CD8-positive, alpha-beta T cell (primary cell): ENCODE measurements at regions of chr22 and their contacts with region 1.

Region 1: GRCh38 chr22:20298803-20299735 is 20.8 kb downstream of the DGCR6L start:
- DNase-seq: peak; percentile 75 to 93 (median 89)
- ATAC-seq: peak; percentile 93
- H3K4me3 ChIP-seq: peak overlapping the region; percentile 43 to 67
- H3K4me3 Mint-ChIP-seq: peak overlapping the region; percentile 82
- H3K27ac ChIP-seq: peak overlapping the region in 1 of 2 experiments; percentile 23
- H3K27ac Mint-ChIP-seq: no peak overlapping the region
- H3K4me1 ChIP-seq: peaks cover 9% of the 10 kb centered on the region
- H3K4me1 Mint-ChIP-seq: peaks cover 7% of the 10 kb centered on the region
- H3K27me3 ChIP-seq: peaks cover 0 to 4% of the 10 kb centered on the region in 2 experiments
- H3K27me3 Mint-ChIP-seq: peaks cover 3% of the 10 kb centered on the region
- CTCF ChIP-seq: no peak

Region 2: DNA sequence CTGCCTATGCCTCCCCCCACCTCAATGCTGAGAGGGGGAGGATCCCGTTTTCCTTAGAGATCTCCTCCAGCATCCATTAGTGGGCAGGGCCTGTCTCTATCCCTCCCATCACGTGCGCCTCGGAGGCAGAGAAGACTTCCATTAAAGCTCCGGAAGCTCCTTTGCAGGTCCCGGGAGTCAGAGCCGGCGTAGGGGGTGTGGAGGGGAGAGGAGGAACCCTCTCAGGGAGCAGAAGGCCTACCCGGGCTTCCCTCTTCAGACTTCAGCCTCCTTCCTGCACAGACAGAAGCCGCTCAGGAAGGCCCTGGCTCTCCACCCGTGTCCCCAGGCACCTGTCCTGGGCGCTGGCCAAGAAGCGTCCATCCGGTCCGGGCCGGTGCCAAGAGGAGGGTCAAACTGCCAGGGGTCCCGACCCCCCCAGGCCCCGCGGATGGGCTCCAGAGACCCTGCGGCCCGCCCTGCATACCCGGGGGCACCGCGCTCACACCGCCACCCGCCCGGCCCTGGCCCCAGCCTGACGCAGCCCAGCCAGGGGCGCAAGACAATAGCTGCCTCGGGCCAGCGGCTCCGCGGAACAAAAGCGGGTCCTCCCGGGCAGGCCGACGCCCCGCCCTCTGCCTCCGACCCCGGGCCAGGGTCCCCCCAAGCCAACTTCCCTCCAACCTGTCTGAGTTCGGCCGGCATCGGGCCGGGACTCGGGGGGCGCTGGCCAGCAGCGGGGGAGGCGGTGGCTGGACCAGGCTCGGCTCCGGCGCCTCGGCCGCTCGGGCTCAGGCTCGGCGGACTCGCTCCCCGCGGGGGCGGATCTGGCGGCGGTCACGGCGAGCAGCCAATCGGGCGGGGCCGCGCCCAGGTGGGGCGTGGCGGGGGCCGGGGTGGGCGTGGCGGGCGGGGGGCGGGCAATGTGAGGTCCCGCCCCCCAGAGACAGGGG is 312.4 kb before region 1 on chr22:
- CTCF ChIA-PET with region 1: no interaction called
- POLR2A ChIA-PET with region 1: no interaction called
- intact Hi-C with region 1: loop called in 1 of 2 experiments (anchors 5 kb)
- DNase-seq: peak; percentile 21 to 79 (median 62)
- ATAC-seq: peak; percentile 93
- H3K4me3 ChIP-seq: peak overlapping the region; percentile 46 to 66
- H3K4me3 Mint-ChIP-seq: peak overlapping the region; percentile 66
- H3K27ac ChIP-seq: no peak overlapping the region
- H3K27ac Mint-ChIP-seq: no peak overlapping the region
- H3K4me1 ChIP-seq: peaks cover 8% of the 10 kb centered on the region
- H3K4me1 Mint-ChIP-seq: peaks cover 3% of the 10 kb centered on the region
- H3K27me3 ChIP-seq: no peaks in the 10 kb centered on the region
- H3K27me3 Mint-ChIP-seq: no peaks in the 10 kb centered on the region
- CTCF ChIP-seq: no peak

Region 3: DNA sequence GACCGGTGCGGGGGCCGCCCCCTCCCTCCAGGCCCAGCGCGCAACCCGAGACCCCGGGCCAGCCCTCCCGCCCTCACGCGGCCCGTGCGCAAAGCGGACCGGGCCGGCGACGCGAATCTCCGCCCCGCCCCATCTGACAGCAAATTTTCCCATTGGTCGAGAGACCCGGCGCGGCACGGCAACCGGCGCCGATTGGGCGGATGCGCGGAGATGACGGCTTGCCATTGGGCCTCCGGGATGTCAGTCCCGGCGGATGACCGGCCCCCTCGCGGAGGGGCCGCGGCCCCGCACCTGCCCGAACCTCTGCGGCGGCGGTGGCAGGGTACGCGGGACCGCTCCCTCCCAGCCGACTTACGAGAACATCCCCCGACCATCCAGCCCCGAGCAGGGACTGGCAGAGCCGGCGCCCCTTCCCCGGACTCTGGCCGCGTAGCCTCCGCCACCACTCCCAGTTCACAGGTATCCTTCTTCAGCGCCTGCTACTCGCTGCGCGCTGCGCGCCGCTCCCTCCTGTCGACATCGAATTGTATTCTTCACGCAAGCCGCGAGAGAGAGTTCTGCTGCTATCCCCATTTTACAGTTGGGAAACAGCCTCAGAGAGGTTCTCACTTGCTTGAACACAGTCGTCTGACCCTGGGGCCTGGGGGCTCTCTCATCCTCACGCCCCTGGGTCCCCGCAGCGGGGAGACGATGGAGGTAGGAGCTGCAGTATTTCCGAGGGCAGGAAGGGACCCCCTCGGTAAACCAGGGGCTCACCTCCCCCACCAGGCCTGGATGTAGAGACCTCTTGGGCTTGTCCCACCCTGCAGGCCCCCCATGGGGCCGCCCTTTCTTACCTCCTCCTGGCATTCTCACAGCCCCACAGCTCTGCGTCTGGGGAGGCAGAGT is 282.1 kb before region 1 on chr22 and contains the start of gene ARVCF:
- CTCF ChIA-PET with region 1: no interaction called
- POLR2A ChIA-PET with region 1: no interaction called
- intact Hi-C with region 1: loop called in 1 of 2 experiments (anchors 1 kb)
- DNase-seq: peak; percentile 85 to 96 (median 92)
- ATAC-seq: peak; percentile 66
- H3K4me3 ChIP-seq: peak within 1 kb of the TSS; percentile 79 to 81
- H3K4me3 Mint-ChIP-seq: peak within 1 kb of the TSS; percentile 91
- H3K27ac ChIP-seq: no peak within 1 kb of the TSS
- H3K27ac Mint-ChIP-seq: peak within 1 kb of the TSS; percentile 14
- H3K4me1 ChIP-seq: peaks cover 19% of the 10 kb centered on the region
- H3K4me1 Mint-ChIP-seq: peaks cover 25% of the 10 kb centered on the region
- H3K27me3 ChIP-seq: no peaks in the 10 kb centered on the region
- H3K27me3 Mint-ChIP-seq: no peaks in the 10 kb centered on the region
- CTCF ChIP-seq: no peak
- total RNA-seq, gene ARVCF: 1.1 to 2.3 TPM

Region 4: DNA sequence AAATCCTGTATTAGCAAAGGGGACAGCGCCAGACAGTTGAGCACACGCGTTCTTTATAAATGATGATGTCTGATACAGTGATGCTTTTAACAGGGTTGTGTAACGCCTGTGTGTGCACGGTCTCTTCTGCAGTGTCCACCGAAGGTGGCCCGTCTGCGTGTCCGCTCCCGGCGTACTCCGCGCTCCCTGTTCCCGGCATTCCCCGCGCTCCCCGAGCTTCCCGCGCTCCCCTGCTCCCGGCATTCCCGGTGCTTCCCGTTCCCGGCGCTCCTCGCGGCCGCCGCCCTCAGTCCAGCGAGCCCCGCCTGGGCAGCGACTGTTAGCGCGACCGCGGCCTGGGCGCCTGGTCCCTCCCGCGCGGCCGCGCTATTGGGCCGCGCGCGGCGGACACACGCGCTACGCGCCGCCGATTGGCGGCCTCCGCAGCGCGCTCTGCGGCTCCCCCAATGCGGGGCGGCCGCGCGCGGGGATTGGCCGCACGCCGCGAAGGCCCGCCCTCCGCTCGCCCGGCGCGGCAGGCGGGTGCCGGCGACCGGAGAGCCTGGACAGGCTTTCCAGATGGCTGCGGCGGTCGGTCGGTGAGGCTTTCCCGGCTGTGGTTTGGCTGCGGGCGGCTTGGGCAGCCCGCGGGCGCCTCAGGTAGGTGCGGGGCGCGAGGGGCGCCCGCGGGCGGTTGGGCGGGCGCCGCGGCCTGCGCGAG is 219.2 kb before region 1 on chr22 and contains the start of gene DGCR8:
- CTCF ChIA-PET with region 1: no interaction called
- POLR2A ChIA-PET with region 1: no interaction called
- intact Hi-C with region 1: loop called in 1 of 2 experiments (anchors 1 kb)
- DNase-seq: peak; percentile 45 to 91 (median 66)
- ATAC-seq: peak; percentile 91
- H3K4me3 ChIP-seq: peak within 1 kb of the TSS; percentile 73 to 99
- H3K4me3 Mint-ChIP-seq: peak within 1 kb of the TSS; percentile 97
- H3K27ac ChIP-seq: peak within 1 kb of the TSS; percentile 62 to 64
- H3K27ac Mint-ChIP-seq: peak within 1 kb of the TSS; percentile 96
- H3K4me1 ChIP-seq: peaks cover 18% of the 10 kb centered on the region
- H3K4me1 Mint-ChIP-seq: peaks cover 43% of the 10 kb centered on the region
- H3K27me3 ChIP-seq: no peaks in the 10 kb centered on the region
- H3K27me3 Mint-ChIP-seq: no peaks in the 10 kb centered on the region
- CTCF ChIP-seq: no peak
- total RNA-seq, gene DGCR8: 16.9 to 22.1 TPM

Region 5: GRCh38 chr22:20319745-20320658 is 20.9 kb after region 1 on chr22 and contains the start of gene DGCR6L:
- CTCF ChIA-PET with region 1: interaction called, 4 read pairs
- POLR2A ChIA-PET with region 1: no interaction called
- intact Hi-C with region 1: loop called in 1 of 2 experiments (anchors 1 kb)
- DNase-seq: peak; percentile 91 to 99 (median 97)
- ATAC-seq: peak; percentile 76
- H3K4me3 ChIP-seq: peak within 1 kb of the TSS; percentile 88 to 97
- H3K4me3 Mint-ChIP-seq: peak within 1 kb of the TSS; percentile 90
- H3K27ac ChIP-seq: peak within 1 kb of the TSS; percentile 69 to 70
- H3K27ac Mint-ChIP-seq: peak within 1 kb of the TSS; percentile 89
- H3K4me1 ChIP-seq: peaks cover 51% of the 10 kb centered on the region
- H3K4me1 Mint-ChIP-seq: peaks cover 62% of the 10 kb centered on the region
- H3K27me3 ChIP-seq: no peaks in the 10 kb centered on the region
- H3K27me3 Mint-ChIP-seq: no peaks in the 10 kb centered on the region
- CTCF ChIP-seq: no peak
- total RNA-seq, gene DGCR6L: 29.8 to 32.9 TPM

Region 6: DNA sequence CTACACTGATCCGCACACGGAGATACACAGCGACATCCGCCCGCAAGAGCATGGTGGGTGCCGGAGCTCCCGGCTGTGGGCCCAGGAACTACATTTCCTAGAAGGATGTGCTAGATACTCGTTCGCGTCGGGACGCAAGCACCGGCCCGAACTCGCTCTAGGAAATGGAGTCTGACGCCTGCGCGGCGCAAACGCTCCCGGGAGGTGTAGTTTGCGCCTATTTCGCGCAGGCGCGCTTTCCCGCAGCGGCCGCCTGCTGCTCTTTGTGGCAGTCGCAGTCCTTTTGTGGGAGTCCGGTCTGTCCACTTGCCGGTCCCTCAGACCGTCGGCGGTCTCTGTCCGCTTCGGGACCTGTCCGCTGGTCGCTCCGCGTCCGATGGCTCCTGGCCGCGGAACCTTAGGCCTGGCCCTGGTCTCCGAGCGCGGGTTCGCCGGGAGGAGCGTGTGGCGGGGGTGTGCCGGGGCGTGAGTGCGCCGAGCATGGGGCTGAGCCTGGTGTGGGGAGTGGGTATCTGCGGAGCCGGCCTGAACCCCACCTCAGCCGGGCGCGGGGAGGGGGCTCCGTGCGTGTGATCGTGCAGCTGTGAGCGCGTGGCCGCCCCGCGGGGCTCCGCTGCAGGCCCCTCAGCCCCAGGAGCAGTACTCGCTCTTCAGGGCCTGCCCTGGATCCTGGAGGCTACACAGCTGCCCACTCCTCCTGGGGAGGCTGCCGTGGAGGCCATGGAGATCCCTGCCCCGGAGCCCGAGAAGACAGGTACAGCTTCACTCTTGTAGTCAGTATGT is 95.0 kb after region 1 on chr22 and contains the start of gene ZNF74:
- CTCF ChIA-PET with region 1: no interaction called
- POLR2A ChIA-PET with region 1: no interaction called
- intact Hi-C with region 1: loop called in 1 of 2 experiments (anchors 10 kb)
- DNase-seq: peak; percentile 68 to 95 (median 84)
- ATAC-seq: peak; percentile 98
- H3K4me3 ChIP-seq: peak within 1 kb of the TSS; percentile 69 to 86
- H3K4me3 Mint-ChIP-seq: peak within 1 kb of the TSS; percentile 87
- H3K27ac ChIP-seq: peak within 1 kb of the TSS; percentile 46 to 79
- H3K27ac Mint-ChIP-seq: peak within 1 kb of the TSS; percentile 95
- H3K4me1 ChIP-seq: peaks cover 21% of the 10 kb centered on the region
- H3K4me1 Mint-ChIP-seq: peaks cover 37% of the 10 kb centered on the region
- H3K27me3 ChIP-seq: no peaks in the 10 kb centered on the region
- H3K27me3 Mint-ChIP-seq: no peaks in the 10 kb centered on the region
- CTCF ChIP-seq: no peak
- total RNA-seq, gene ZNF74: 1.9 to 2.1 TPM